Sciatic nerve (tissue), 2 donors: ENCODE measurements at regions of chr3 and their contacts with region 1.

Region 1: DNA sequence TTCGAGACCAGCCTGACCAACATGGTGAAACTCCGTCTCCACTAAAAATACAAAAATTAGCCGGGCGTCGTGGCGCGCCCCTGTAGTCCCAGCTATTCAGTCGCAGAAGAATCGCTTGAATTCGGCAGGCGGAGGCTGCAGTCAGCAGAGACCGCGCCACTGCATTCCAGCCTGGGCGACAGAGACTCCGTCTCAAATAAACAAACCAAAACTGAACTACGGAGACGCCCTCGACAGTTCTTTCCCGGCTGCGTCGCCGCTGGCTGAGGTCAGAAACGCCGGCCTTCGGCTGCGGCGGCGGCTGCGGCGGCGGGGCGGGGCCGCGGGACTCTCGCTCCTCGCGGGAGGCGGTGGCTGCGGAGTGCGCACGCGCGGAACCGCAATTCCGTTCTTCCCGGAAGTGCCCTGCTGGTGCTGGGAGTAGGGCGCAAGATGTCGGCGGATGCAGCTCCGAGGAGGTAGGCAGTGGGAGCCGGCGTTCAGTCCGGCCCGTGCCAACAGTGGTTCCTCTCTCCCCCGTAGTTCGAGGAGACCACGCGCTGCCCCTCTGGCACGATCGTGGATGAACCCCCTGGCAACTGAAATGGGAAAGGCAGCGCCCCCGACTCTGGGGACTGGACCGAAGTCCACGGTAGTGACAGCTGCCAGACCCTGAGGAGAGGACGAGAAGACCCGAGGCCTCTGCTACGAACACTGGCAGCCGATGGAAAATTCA is 49.5 kb downstream of the TMEM44 start:
- DNase-seq: peak; percentile 97
- ATAC-seq: peak; percentile 97

Region 2: DNA sequence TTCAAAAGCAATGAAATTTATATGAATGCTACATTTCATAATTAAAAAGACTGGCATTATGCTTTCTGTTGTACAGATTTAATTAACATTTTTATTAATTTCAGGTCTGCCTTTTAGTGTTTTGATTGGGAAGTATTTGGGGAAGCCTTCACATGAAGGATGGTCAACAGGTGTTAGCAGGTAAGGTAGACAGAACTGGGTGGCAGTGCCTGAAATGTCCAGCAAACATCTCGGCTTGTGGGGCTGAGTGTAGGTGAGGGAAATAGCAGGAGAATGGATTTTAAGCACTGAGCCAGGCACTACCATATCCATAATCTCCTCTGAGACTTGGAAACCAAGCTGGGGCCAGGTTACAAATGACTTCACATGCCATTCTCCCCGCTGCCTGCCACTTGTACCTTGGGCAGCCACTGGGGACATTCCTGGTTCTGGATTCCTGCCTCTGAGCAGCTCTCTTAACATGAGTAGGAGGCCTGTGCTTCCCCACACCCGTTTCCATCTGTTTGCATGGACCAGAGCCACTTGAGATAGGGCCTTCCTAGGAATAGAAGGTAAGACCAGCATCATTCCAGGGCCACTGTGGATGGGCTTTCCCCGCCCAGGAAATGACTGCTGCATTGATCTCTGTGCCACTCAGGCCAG is 573.7 kb before region 1 on chr3:
- intact Hi-C with region 1: no loop called
- DNase-seq: no peak
- ATAC-seq: no peak

Region 3: GRCh38 chr3:194486540-194487288 is 97.0 kb before region 1 on chr3 and contains the start of gene ATP13A3:
- intact Hi-C with region 1: loop called (anchors 10 kb)
- DNase-seq: peak; percentile 92
- ATAC-seq: peak; percentile 96
- total RNA-seq, gene ATP13A3: 124 TPM